Gastrocnemius medialis (tissue), 4 donors: ENCODE measurements at regions of chr6 and their contacts with region 1.

Region 1: GRCh38 chr6:2999618-3000557 is at the start of gene NQO2:
- DNase-seq: peak; percentile 86 to 90
- ATAC-seq: peak; percentile 57 to 63
- H3K4me3 ChIP-seq: peak within 1 kb of the TSS; percentile 68 to 86 (median 76)
- H3K27ac ChIP-seq: peak within 1 kb of the TSS; percentile 90 to 96 (median 91)
- H3K4me1 ChIP-seq: peaks cover 21 to 32% of the 10 kb centered on the region in 2 donors
- H3K27me3 ChIP-seq: no peaks in the 10 kb centered on the region
- CTCF ChIP-seq: peak in 1 of 5 experiments; percentile 20
- POLR2A ChIP-seq: peak; percentile 97 to 98
- total RNA-seq, gene NQO2: 46.7 to 94.5 (median 60.3) TPM

Region 2: GRCh38 chr6:3023663-3024483 is 24.0 kb after region 1 on chr6:
- in situ Hi-C with region 1: no loop called
- intact Hi-C with region 1: loop called (anchors 1 kb)
- DNase-seq: peak; percentile 94 to 97
- ATAC-seq: peak; percentile 84 to 86
- H3K4me3 ChIP-seq: peak overlapping the region; percentile 64 to 79 (median 70)
- H3K27ac ChIP-seq: peak overlapping the region; percentile 93 to 97 (median 94)
- H3K4me1 ChIP-seq: peaks cover 26 to 47% of the 10 kb centered on the region in 2 donors
- H3K27me3 ChIP-seq: no peaks in the 10 kb centered on the region
- CTCF ChIP-seq: no peak
- POLR2A ChIP-seq: peak; percentile 89 to 90

Region 3: DNA sequence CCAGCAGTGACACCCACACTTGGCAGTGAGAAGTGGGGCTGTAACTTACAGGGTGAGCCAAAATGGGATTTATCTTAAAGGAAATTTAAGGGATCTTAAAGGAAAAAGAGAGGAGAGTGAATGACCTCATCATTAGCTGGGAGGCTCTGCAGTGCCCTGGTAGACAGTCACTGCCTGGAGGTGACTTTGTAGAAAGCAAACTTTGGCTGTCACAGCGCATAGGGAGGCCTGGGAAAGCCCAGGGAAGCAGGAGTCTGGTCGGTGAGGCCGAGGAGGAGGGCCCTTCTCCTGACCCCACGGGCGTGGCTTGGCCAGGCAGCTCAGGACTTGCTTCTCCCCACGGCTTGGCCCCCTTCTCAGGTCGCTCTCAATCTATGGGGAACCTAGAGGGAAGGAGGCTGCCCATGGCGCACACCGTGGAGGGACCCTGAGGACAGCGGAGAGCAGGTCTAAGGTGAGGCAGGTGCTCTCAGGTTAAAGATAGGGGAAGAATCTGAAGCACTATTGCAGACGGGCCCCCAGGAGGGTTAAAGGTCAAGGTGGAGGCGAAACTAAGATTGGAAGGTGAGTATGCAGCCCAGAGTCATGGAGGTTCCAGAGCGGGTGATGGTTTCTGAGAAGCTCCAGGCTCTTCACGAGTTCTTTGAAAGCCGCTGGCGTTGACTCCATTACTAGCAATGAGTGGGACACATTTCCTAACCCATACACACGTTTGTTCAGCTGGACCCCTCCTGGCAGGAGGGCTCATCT is 52.8 kb after region 1 on chr6:
- in situ Hi-C with region 1: loop called in 1 of 4 experiments (anchors 5 kb)
- intact Hi-C with region 1: loop called (anchors 1 kb)
- DNase-seq: no peak
- ATAC-seq: no peak
- H3K4me3 ChIP-seq: no peak overlapping the region
- H3K27ac ChIP-seq: no peak overlapping the region
- H3K4me1 ChIP-seq: peaks cover 4 to 14% of the 10 kb centered on the region in 2 donors
- H3K27me3 ChIP-seq: no peaks in the 10 kb centered on the region
- CTCF ChIP-seq: no peak
- POLR2A ChIP-seq: no peak

Region 4: DNA sequence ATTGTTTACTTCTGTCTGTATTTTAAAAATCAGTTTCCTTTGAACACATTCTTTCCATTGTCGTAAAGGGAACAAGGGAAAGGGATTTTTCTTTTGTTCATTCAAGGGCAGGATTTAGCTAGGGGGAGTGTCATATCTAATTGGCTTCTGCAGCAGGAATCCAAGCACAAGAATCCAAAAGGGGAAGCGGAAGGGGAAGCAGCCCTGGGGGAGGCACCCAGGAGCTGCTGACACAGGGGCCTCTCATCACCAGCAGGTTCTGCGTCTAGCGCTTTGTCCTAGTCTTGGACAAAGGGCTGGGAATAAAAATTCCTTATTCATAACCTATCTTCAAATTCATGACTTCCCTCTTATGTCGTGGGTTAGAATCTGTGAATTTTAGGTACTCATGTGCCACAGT is 82.1 kb after region 1 on chr6:
- in situ Hi-C with region 1: no loop called
- intact Hi-C with region 1: no loop called
- DNase-seq: no peak
- ATAC-seq: no peak
- H3K4me3 ChIP-seq: no peak overlapping the region
- H3K27ac ChIP-seq: no peak overlapping the region
- H3K4me1 ChIP-seq: no peaks in the 10 kb centered on the region
- H3K27me3 ChIP-seq: no peaks in the 10 kb centered on the region
- CTCF ChIP-seq: no peak
- POLR2A ChIP-seq: no peak

Region 5: GRCh38 chr6:3118353-3119039 is 118.6 kb after region 1 on chr6 and contains the start of gene BPHL:
- in situ Hi-C with region 1: no loop called
- intact Hi-C with region 1: loop called (anchors 5 kb)
- DNase-seq: peak; percentile 95 to 96
- ATAC-seq: peak; percentile 96
- H3K4me3 ChIP-seq: peak within 1 kb of the TSS; percentile 78 to 90 (median 82)
- H3K27ac ChIP-seq: peak within 1 kb of the TSS; percentile 90 to 97 (median 96)
- H3K4me1 ChIP-seq: peaks cover 13 to 14% of the 10 kb centered on the region in 2 donors
- H3K27me3 ChIP-seq: no peaks in the 10 kb centered on the region
- CTCF ChIP-seq: no peak
- POLR2A ChIP-seq: peak; percentile 76
- total RNA-seq, gene BPHL: 4.7 to 8.7 (median 5.8) TPM